CD8-positive, alpha-beta memory T cell (primary cell): ENCODE measurements at regions of chr2 and their contacts with region 1.

Region 1: DNA sequence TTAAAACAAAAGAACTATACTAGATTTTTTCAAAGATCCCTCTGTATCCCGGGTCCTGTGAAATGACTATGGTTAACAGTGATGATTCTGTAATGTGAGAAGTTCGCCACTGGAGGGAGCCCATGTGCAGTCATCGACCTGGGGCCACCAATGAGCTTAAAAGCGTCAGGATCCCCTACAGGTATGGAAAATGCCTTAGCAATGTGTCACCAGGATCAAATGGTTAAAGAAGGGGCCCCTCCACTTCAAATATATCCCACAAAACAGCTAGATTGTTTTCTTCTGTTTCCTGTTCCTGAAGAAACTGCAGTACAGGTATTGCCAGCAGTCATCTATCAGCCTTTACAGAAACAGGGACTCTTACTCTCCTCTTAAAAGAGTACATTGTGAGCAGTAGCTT is 15.3 kb downstream of the CHRNA1 start:
- DNase-seq: peak; percentile 54 to 78 (median 63)
- H3K4me3 ChIP-seq: no peak overlapping the region
- H3K4me3 Mint-ChIP-seq: peak overlapping the region in 1 of 7 donors; percentile 13
- H3K27ac ChIP-seq: no peak overlapping the region
- H3K27ac Mint-ChIP-seq: peak overlapping the region in 7 of 8 donors; percentile 13 to 92 (median 88)
- H3K4me1 ChIP-seq: peaks cover 37% of the 10 kb centered on the region
- H3K4me1 Mint-ChIP-seq: peaks cover 39 to 50% (median 50%) of the 10 kb centered on the region in 3 donors
- H3K27me3 ChIP-seq: no peaks in the 10 kb centered on the region
- H3K27me3 Mint-ChIP-seq: no peaks in the 10 kb centered on the region

Region 2: GRCh38 chr2:174729797-174730697 is 18.9 kb before region 1 on chr2:
- CTCF ChIA-PET with region 1: interaction called, 13 read pairs
- POLR2A ChIA-PET with region 1: interaction called, 4 read pairs
- DNase-seq: peak; percentile 13 to 60 (median 30)
- H3K4me3 ChIP-seq: peak overlapping the region; percentile 68
- H3K4me3 Mint-ChIP-seq: peak overlapping the region; percentile 81 to 94 (median 85)
- H3K27ac ChIP-seq: no peak overlapping the region
- H3K27ac Mint-ChIP-seq: peak overlapping the region in 4 of 8 donors; percentile 14 to 80 (median 24)
- H3K4me1 ChIP-seq: peaks cover 7% of the 10 kb centered on the region
- H3K4me1 Mint-ChIP-seq: peaks cover 8 to 24% (median 22%) of the 10 kb centered on the region in 3 donors
- H3K27me3 ChIP-seq: peaks cover 5% of the 10 kb centered on the region
- H3K27me3 Mint-ChIP-seq: peaks cover 6 to 19% of the 10 kb centered on the region in 2 donors

Region 3: GRCh38 chr2:174771631-174772471 is 22.9 kb after region 1 on chr2:
- CTCF ChIA-PET with region 1: interaction called, 33 read pairs
- POLR2A ChIA-PET with region 1: no interaction called
- DNase-seq: peak in 1 of 5 donors; percentile 66
- H3K4me3 ChIP-seq: no peak overlapping the region
- H3K4me3 Mint-ChIP-seq: no peak overlapping the region
- H3K27ac ChIP-seq: no peak overlapping the region
- H3K27ac Mint-ChIP-seq: peak overlapping the region in 6 of 8 donors; percentile 20 to 85 (median 60)
- H3K4me1 ChIP-seq: peaks cover 11% of the 10 kb centered on the region
- H3K4me1 Mint-ChIP-seq: peaks cover 5 to 19% (median 16%) of the 10 kb centered on the region in 3 donors
- H3K27me3 ChIP-seq: no peaks in the 10 kb centered on the region
- H3K27me3 Mint-ChIP-seq: peaks cover 0 to 12% of the 10 kb centered on the region in 2 donors

Region 4: DNA sequence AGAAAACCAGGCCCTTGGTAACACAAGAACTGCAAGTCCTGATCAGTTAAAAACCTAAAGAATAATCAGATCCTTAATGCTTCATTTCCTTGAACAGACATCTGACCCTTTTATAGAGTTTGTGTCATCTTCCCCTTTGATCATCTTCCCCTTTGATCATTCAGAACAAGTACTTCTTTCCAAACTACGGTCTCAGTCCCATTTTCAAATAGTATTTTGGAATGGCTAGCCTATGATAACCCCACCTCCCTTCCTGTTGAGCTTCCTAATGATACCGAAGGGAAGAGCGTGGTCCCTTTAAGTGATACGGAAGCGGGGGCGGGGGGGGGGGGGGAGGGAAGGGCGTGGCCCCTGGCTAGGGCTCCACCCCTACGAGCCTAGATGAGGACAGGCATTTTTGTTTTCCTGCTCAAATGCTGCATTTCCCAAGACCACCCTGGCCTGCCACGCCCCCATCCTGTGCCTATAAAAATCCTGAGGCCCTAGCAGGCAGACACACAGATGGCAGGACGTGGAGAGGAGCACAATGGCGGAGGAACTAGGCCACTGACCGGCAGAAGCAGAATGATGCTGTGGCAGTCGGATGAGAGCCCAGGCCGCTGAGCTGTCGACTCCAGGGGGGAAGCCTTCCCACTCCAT is 39.5 kb after region 1 on chr2:
- CTCF ChIA-PET with region 1: interaction called, 10 read pairs
- POLR2A ChIA-PET with region 1: no interaction called
- DNase-seq: peak in 1 of 5 donors; percentile 6
- H3K4me3 ChIP-seq: no peak overlapping the region
- H3K4me3 Mint-ChIP-seq: peak overlapping the region in 5 of 7 donors; percentile 9 to 77 (median 73)
- H3K27ac ChIP-seq: peak overlapping the region; percentile 13
- H3K27ac Mint-ChIP-seq: peak overlapping the region in 7 of 8 donors; percentile 18 to 98 (median 66)
- H3K4me1 ChIP-seq: peaks cover 8% of the 10 kb centered on the region
- H3K4me1 Mint-ChIP-seq: peaks cover 8 to 23% (median 17%) of the 10 kb centered on the region in 3 donors
- H3K27me3 ChIP-seq: no peaks in the 10 kb centered on the region
- H3K27me3 Mint-ChIP-seq: peaks cover 0 to 5% of the 10 kb centered on the region in 2 donors

Region 5: GRCh38 chr2:174985630-174986029 is 236.7 kb after region 1 on chr2:
- CTCF ChIA-PET with region 1: interaction called, 35 read pairs
- POLR2A ChIA-PET with region 1: no interaction called
- DNase-seq: no peak
- H3K4me3 ChIP-seq: no peak overlapping the region
- H3K4me3 Mint-ChIP-seq: no peak overlapping the region
- H3K27ac ChIP-seq: no peak overlapping the region
- H3K27ac Mint-ChIP-seq: no peak overlapping the region
- H3K4me1 ChIP-seq: no peaks in the 10 kb centered on the region
- H3K4me1 Mint-ChIP-seq: peaks cover 0 to 9% (median 8%) of the 10 kb centered on the region in 3 donors
- H3K27me3 ChIP-seq: no peaks in the 10 kb centered on the region
- H3K27me3 Mint-ChIP-seq: peaks cover 2 to 11% of the 10 kb centered on the region in 2 donors